ENCODE measurements at regions of chr14 and their contacts with region 1.

Region 1: GRCh38 chr14:70027785-70028428 is 148.7 kb downstream of the SMOC1 start:
- DNase-seq: peak; percentile 81
- ATAC-seq: peak; percentile 89
- H3K4me3 Mint-ChIP-seq: no peak overlapping the region
- H3K27ac Mint-ChIP-seq: no peak overlapping the region
- H3K4me1 Mint-ChIP-seq: no peaks in the 10 kb centered on the region
- H3K27me3 Mint-ChIP-seq: peaks cover 2% of the 10 kb centered on the region
- CTCF ChIP-seq: peak; percentile 97

Region 2: DNA sequence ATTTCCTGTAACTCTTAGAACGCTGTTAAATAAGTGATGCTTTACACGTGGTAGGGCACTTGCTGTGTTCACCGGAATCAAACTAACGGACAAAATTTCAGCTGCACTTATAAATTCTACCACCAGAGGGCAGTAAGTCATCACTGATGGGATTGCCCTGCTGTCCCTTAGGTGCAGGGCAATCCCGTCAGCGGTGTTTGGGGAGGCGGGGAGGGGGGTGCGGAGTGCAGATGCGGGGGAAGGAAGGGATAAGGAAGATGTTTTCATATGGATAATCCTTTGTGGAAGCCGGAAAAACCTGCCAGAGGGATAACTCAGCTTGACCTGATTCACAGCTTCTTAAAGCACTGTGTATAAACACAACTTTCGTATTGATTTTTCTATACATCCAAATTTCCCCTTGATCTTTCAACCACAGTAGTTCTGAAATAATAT is 209.1 kb before region 1 on chr14:
- CTCF ChIA-PET with region 1: interaction called, 71 read pairs
- POLR2A ChIA-PET with region 1: no interaction called
- intact Hi-C with region 1: loop called (anchors 2 kb)
- DNase-seq: peak; percentile 61
- ATAC-seq: peak; percentile 88
- H3K4me3 Mint-ChIP-seq: no peak overlapping the region
- H3K27ac Mint-ChIP-seq: no peak overlapping the region
- H3K4me1 Mint-ChIP-seq: no peaks in the 10 kb centered on the region
- H3K27me3 Mint-ChIP-seq: peaks cover 2% of the 10 kb centered on the region
- CTCF ChIP-seq: peak; percentile 67

Region 3: DNA sequence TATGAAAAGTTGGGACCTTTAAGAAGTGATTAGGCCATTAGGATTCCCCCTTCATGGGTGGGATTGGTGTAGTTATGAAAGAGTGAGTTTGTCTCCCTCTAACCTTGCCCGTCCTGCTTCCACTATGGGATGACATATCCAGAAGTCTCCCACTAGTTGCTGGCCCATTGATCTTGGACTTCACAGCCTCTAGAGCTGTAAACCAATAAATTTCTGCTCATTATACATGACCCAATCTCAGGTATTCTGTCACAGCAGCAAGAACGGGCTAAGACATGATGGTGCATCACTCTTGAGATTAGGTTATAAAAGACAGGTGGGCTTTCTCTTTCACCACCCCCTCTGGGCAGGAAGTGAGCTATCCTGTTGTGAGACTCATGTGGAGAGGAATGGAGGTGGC is 157.3 kb before region 1 on chr14:
- CTCF ChIA-PET with region 1: interaction called, 16 read pairs
- POLR2A ChIA-PET with region 1: no interaction called
- intact Hi-C with region 1: no loop called
- DNase-seq: no peak
- ATAC-seq: no peak
- H3K4me3 Mint-ChIP-seq: no peak overlapping the region
- H3K27ac Mint-ChIP-seq: no peak overlapping the region
- H3K4me1 Mint-ChIP-seq: no peaks in the 10 kb centered on the region
- H3K27me3 Mint-ChIP-seq: peaks cover 11% of the 10 kb centered on the region
- CTCF ChIP-seq: no peak

Region 4: GRCh38 chr14:70013269-70013873 is 14.5 kb before region 1 on chr14:
- CTCF ChIA-PET with region 1: interaction called, 18 read pairs
- POLR2A ChIA-PET with region 1: interaction called, 3 read pairs
- intact Hi-C with region 1: no loop called
- DNase-seq: peak; percentile 72
- ATAC-seq: peak; percentile 69
- H3K4me3 Mint-ChIP-seq: no peak overlapping the region
- H3K27ac Mint-ChIP-seq: no peak overlapping the region
- H3K4me1 Mint-ChIP-seq: peaks cover 2% of the 10 kb centered on the region
- H3K27me3 Mint-ChIP-seq: peaks cover 14% of the 10 kb centered on the region
- CTCF ChIP-seq: peak; percentile 57

Measured in activated CD8-positive, alpha-beta T cell treated with anti-CD3 and anti-CD28 coated beads for 36 hours (primary cell).